ENCODE measurements at regions of chr18 and their contacts with region 1.

Region 1: DNA sequence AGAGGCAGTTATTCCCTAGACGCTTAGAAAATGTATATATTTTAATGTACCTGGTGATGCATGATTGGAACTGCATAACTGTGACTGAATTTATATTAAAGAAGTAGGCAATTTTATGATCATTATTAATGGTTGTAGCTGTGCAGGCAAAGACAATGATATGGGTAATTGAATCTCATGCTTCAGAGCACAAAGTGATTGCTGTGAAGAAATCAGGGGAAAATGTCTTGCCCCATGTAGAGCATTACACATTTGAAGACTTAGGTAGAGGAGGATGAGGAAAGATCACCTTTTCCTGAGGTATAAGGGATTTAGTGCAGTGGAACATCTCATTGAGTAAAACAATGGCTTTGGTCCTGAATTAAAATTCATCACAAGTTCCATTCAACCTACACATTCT is 246.8 kb upstream of the DCC start:
- DNase-seq: no peak
- H3K4me3 ChIP-seq: no peak overlapping the region
- H3K27ac ChIP-seq: no peak overlapping the region
- H3K4me1 ChIP-seq: no peaks in the 10 kb centered on the region
- H3K27me3 ChIP-seq: no peaks in the 10 kb centered on the region
- CTCF ChIP-seq: no peak
- POLR2A ChIP-seq: no peak

Region 2: GRCh38 chr18:52219102-52219501 is 125.9 kb after region 1 on chr18:
- intact Hi-C with region 1: no loop called
- DNase-seq: no peak
- H3K4me3 ChIP-seq: no peak overlapping the region
- H3K27ac ChIP-seq: no peak overlapping the region
- H3K4me1 ChIP-seq: no peaks in the 10 kb centered on the region
- H3K27me3 ChIP-seq: no peaks in the 10 kb centered on the region
- CTCF ChIP-seq: no peak
- POLR2A ChIP-seq: no peak

Region 3: DNA sequence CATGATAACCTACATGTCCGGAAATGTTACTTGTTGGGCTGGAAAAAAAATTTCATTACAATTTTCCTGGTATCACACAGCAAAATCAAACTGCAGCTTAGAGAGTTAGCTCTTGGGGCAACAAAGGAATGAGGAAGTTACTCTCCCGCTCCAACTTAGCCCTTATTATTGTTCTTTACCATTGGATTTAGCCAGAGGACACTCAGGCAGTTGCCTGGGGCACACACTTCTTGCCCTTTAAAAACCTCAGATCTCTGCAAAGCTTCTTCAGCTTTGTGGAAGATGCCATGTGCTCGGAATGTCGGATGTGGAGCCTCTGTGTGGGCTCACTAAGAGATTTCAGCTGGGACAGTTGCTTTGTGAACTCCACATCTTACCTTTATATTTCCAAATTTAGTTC is 650.2 kb after region 1 on chr18:
- intact Hi-C with region 1: loop called (anchors 5 kb)
- DNase-seq: no peak
- H3K4me3 ChIP-seq: no peak overlapping the region
- H3K27ac ChIP-seq: no peak overlapping the region
- H3K4me1 ChIP-seq: no peaks in the 10 kb centered on the region
- H3K27me3 ChIP-seq: no peaks in the 10 kb centered on the region
- CTCF ChIP-seq: no peak
- POLR2A ChIP-seq: no peak

Measured in vagina (tissue), 2 donors.